CD8-positive, alpha-beta memory T cell (primary cell): ENCODE measurements at regions of chr1 and their contacts with region 1.

Region 1: GRCh38 chr1:17236779-17237560 is 11.9 kb upstream of the PADI3 start:
- DNase-seq: peak; percentile 57 to 87 (median 79)
- H3K4me3 ChIP-seq: no peak overlapping the region
- H3K4me3 Mint-ChIP-seq: no peak overlapping the region
- H3K27ac ChIP-seq: no peak overlapping the region
- H3K27ac Mint-ChIP-seq: peak overlapping the region in 2 of 8 donors; percentile 19 to 43
- H3K4me1 ChIP-seq: no peaks in the 10 kb centered on the region
- H3K4me1 Mint-ChIP-seq: no peaks in the 10 kb centered on the region
- H3K27me3 ChIP-seq: no peaks in the 10 kb centered on the region
- H3K27me3 Mint-ChIP-seq: peaks cover 3 to 4% of the 10 kb centered on the region in 2 donors

Region 2: GRCh38 chr1:17011439-17012307 is 225.3 kb before region 1 on chr1 and contains the start of gene ATP13A2:
- CTCF ChIA-PET with region 1: no interaction called
- POLR2A ChIA-PET with region 1: no interaction called
- DNase-seq: peak; percentile 72 to 87 (median 79)
- H3K4me3 ChIP-seq: peak within 1 kb of the TSS; percentile 75
- H3K4me3 Mint-ChIP-seq: peak within 1 kb of the TSS; percentile 83 to 92 (median 87)
- H3K27ac ChIP-seq: peak within 1 kb of the TSS; percentile 54
- H3K27ac Mint-ChIP-seq: peak within 1 kb of the TSS; percentile 61 to 94 (median 84)
- H3K4me1 ChIP-seq: peaks cover 17% of the 10 kb centered on the region
- H3K4me1 Mint-ChIP-seq: peaks cover 15 to 24% (median 19%) of the 10 kb centered on the region in 3 donors
- H3K27me3 ChIP-seq: no peaks in the 10 kb centered on the region
- H3K27me3 Mint-ChIP-seq: no peaks in the 10 kb centered on the region
- total RNA-seq, gene ATP13A2: 43.8 to 44.0 TPM

Region 3: GRCh38 chr1:17125756-17126237 is 111.2 kb before region 1 on chr1:
- CTCF ChIA-PET with region 1: interaction called, 154 read pairs
- POLR2A ChIA-PET with region 1: no interaction called
- DNase-seq: peak; percentile 57 to 81 (median 74)
- H3K4me3 ChIP-seq: no peak overlapping the region
- H3K4me3 Mint-ChIP-seq: no peak overlapping the region
- H3K27ac ChIP-seq: no peak overlapping the region
- H3K27ac Mint-ChIP-seq: no peak overlapping the region
- H3K4me1 ChIP-seq: no peaks in the 10 kb centered on the region
- H3K4me1 Mint-ChIP-seq: peaks cover 0 to 3% (median 0%) of the 10 kb centered on the region in 3 donors
- H3K27me3 ChIP-seq: no peaks in the 10 kb centered on the region
- H3K27me3 Mint-ChIP-seq: peaks cover 14 to 24% of the 10 kb centered on the region in 2 donors

Region 4: GRCh38 chr1:17661546-17662157 is 424.7 kb after region 1 on chr1:
- CTCF ChIA-PET with region 1: no interaction called
- POLR2A ChIA-PET with region 1: no interaction called
- DNase-seq: peak in 3 of 5 donors; percentile 16 to 26 (median 26)
- H3K4me3 ChIP-seq: no peak overlapping the region
- H3K4me3 Mint-ChIP-seq: no peak overlapping the region
- H3K27ac ChIP-seq: no peak overlapping the region
- H3K27ac Mint-ChIP-seq: no peak overlapping the region
- H3K4me1 ChIP-seq: no peaks in the 10 kb centered on the region
- H3K4me1 Mint-ChIP-seq: no peaks in the 10 kb centered on the region
- H3K27me3 ChIP-seq: no peaks in the 10 kb centered on the region
- H3K27me3 Mint-ChIP-seq: peaks cover 0 to 4% of the 10 kb centered on the region in 2 donors